Endothelial cell of umbilical vein (primary cell): ENCODE measurements at regions of chr3 and their contacts with region 1.

Region 1: GRCh38 chr3:110413807-110414748 is 657.5 kb upstream of the NECTIN3 start:
- DNase-seq: peak; percentile 92
- H3K4me3 ChIP-seq: no peak overlapping the region
- H3K27ac ChIP-seq: peak overlapping the region; percentile 99
- H3K4me1 ChIP-seq: peaks cover 39% of the 10 kb centered on the region
- H3K27me3 ChIP-seq: no peaks in the 10 kb centered on the region
- CTCF ChIP-seq: no peak
- POLR2A ChIP-seq: no peak

Region 2: GRCh38 chr3:109731620-109732473 is 682.2 kb before region 1 on chr3:
- CTCF ChIA-PET with region 1: no interaction called
- POLR2A ChIA-PET with region 1: no interaction called
- dilution Hi-C with region 1: no loop called
- intact Hi-C with region 1: loop called (anchors 5 kb)
- DNase-seq: peak; percentile 51
- H3K4me3 ChIP-seq: no peak overlapping the region
- H3K27ac ChIP-seq: no peak overlapping the region
- H3K4me1 ChIP-seq: no peaks in the 10 kb centered on the region
- H3K27me3 ChIP-seq: no peaks in the 10 kb centered on the region
- CTCF ChIP-seq: peak; percentile 50
- POLR2A ChIP-seq: no peak

Region 3: DNA sequence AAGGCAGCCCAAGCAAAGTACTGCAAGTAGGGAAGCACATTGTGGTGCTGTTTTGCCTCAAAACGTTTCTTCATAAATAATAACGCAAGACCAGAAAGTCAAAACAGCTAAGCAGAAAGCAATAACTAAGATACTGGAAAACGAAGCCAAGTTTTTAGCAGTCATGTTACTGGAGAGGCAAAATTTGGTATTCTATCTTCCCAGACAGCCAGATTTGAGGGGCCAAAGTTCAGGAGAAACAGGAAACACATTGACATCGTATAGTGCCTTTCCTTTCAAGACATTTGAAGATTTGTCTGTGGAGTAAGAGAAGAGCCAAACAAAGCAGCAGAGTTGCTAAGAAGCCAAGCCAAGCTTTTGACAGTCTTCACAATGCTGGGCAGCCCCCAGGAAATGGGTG is 186.1 kb before region 1 on chr3:
- CTCF ChIA-PET with region 1: no interaction called
- POLR2A ChIA-PET with region 1: no interaction called
- dilution Hi-C with region 1: no loop called
- intact Hi-C with region 1: no loop called
- DNase-seq: peak; percentile 2
- H3K4me3 ChIP-seq: no peak overlapping the region
- H3K27ac ChIP-seq: no peak overlapping the region
- H3K4me1 ChIP-seq: no peaks in the 10 kb centered on the region
- H3K27me3 ChIP-seq: peaks cover 0 to 2% of the 10 kb centered on the region in 2 experiments
- CTCF ChIP-seq: no peak
- POLR2A ChIP-seq: no peak

Region 4: DNA sequence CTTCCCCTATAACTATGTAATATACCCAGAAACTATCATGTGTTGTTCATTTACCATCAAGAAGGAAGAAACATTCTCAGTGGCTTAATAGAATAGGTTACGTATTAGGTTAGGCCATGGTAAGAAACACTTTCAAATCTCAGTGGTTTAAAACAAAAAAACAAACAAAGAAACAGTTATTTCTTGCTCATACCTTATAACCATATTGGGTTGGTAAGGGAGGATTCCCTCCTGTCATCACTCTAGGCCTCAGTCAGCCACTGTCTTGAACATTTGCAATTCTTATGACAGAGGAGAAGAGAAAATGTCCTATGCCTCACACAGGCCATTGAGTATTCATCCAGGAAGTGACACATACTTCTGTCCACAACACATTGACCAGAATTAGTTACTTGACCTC is 70.1 kb before region 1 on chr3:
- CTCF ChIA-PET with region 1: no interaction called
- POLR2A ChIA-PET with region 1: no interaction called
- dilution Hi-C with region 1: no loop called
- intact Hi-C with region 1: loop called (anchors 5 kb)
- DNase-seq: peak; percentile 9
- H3K4me3 ChIP-seq: no peak overlapping the region
- H3K27ac ChIP-seq: peak overlapping the region; percentile 0
- H3K4me1 ChIP-seq: peaks cover 21% of the 10 kb centered on the region
- H3K27me3 ChIP-seq: no peaks in the 10 kb centered on the region
- CTCF ChIP-seq: no peak
- POLR2A ChIP-seq: no peak

Region 5: DNA sequence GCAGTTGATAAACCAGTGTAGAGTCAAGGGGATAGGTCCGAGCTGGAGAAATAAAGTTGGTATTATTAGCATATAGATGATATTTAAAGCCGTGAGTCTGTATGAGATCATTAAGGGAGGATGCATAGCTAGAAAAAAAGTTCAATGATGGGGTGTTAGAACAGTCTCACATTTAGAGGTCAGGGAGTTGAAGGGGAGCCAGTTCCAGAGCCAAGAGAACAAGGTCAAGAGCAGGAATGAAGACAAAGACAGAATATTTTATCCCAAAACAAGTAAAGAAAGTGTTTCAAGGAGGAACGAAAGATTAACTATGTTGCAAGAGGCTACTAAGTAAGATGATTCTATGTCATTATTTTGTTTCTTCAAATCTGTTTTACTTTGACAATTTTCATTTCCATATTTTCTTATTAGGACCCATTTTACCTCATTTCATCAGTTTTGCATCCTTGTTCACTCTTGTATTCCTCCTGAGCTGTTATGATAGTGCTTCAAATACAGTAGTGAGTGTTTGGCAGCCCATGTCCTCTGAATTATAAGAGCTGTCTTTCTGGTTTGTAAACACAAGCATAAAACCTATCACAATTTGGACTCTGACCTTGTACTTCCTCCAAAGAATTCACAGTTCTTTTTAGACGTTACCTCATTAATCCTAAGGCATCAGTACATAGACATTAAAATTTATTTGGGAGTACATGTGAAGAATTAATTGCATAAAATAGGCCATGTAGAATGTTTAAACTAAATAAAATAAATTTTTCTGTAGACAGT is 38.1 kb before region 1 on chr3:
- CTCF ChIA-PET with region 1: no interaction called
- POLR2A ChIA-PET with region 1: no interaction called
- dilution Hi-C with region 1: no loop called
- intact Hi-C with region 1: no loop called
- DNase-seq: no peak
- H3K4me3 ChIP-seq: no peak overlapping the region
- H3K27ac ChIP-seq: no peak overlapping the region
- H3K4me1 ChIP-seq: no peaks in the 10 kb centered on the region
- H3K27me3 ChIP-seq: no peaks in the 10 kb centered on the region
- CTCF ChIP-seq: no peak
- POLR2A ChIP-seq: no peak

Region 6: GRCh38 chr3:110521019-110521418 is 106.9 kb after region 1 on chr3:
- CTCF ChIA-PET with region 1: interaction called, 4 read pairs
- POLR2A ChIA-PET with region 1: no interaction called
- dilution Hi-C with region 1: no loop called
- intact Hi-C with region 1: loop called (anchors 1 kb)
- DNase-seq: peak; percentile 97
- H3K4me3 ChIP-seq: no peak overlapping the region
- H3K27ac ChIP-seq: peak overlapping the region; percentile 76
- H3K4me1 ChIP-seq: peaks cover 18% of the 10 kb centered on the region
- H3K27me3 ChIP-seq: no peaks in the 10 kb centered on the region
- CTCF ChIP-seq: no peak
- POLR2A ChIP-seq: no peak

Region 7: DNA sequence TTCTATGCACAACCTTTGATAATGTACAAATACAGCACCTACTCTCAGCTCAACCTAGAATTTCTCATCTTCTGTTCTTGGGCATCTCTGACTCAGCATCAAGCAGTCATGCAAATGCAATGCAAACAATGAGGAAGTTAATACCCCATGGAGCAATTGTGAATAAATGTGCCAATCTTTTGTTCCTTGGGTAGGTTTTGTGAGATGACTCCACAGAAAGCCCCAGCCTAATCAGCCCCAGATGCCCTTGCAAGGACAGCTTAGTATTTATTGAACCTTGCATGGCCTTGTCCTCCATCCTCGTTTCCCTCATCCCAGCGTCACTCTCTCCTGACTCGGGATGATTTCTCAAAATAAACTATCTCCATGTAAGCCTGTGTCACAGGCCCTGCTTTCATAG is 162.9 kb after region 1 on chr3:
- CTCF ChIA-PET with region 1: no interaction called
- POLR2A ChIA-PET with region 1: no interaction called
- dilution Hi-C with region 1: no loop called
- intact Hi-C with region 1: loop called (anchors 5 kb)
- DNase-seq: peak; percentile 65
- H3K4me3 ChIP-seq: no peak overlapping the region
- H3K27ac ChIP-seq: peak overlapping the region; percentile 60
- H3K4me1 ChIP-seq: peaks cover 11% of the 10 kb centered on the region
- H3K27me3 ChIP-seq: no peaks in the 10 kb centered on the region
- CTCF ChIP-seq: no peak
- POLR2A ChIP-seq: no peak

Region 8: DNA sequence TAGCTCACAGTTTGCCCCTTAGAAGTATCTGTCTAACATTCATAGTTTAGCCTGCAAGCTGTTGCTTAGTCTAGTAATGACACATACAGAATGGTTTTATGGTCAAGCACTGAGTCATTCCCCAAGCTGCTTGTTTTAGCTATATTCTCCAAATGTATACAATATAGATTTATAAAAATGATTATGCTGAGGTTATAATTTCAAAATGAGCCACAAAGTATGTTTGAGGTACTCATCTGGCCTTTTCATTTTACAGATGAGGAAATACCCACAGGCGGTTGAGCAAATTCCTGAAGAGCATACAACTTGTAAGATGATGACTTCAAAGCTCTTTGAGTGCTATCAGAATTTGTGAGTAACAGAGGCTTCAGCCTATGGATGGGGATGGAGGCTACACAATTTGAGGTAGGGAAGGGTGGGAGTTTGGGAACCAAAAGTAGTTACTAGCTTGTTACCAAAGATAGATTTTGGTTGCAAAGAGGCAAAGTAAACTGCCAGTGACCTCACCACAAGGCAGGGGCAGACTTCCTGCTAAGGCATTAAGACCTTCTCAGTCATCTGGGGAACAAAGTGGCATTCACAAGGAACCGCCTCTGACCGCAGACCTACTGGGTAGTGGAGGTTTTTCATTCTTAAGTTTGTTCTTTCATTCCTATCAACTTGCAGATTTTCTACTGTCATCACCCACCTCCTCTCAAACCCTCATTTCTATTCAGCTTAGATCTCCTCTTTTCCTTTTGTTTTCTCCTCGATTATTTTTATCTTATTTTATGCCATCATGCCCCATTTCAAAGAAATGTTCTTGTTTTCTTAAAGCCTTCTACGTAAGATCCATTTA is 400.3 kb after region 1 on chr3:
- CTCF ChIA-PET with region 1: no interaction called
- POLR2A ChIA-PET with region 1: no interaction called
- dilution Hi-C with region 1: no loop called
- intact Hi-C with region 1: loop called (anchors 10 kb)
- DNase-seq: peak; percentile 36
- H3K4me3 ChIP-seq: no peak overlapping the region
- H3K27ac ChIP-seq: peak overlapping the region; percentile 61
- H3K4me1 ChIP-seq: peaks cover 21% of the 10 kb centered on the region
- H3K27me3 ChIP-seq: no peaks in the 10 kb centered on the region
- CTCF ChIP-seq: no peak
- POLR2A ChIP-seq: no peak